A673 (cell line): ENCODE measurements at regions of chr1 and their contacts with region 1.

Region 1: DNA sequence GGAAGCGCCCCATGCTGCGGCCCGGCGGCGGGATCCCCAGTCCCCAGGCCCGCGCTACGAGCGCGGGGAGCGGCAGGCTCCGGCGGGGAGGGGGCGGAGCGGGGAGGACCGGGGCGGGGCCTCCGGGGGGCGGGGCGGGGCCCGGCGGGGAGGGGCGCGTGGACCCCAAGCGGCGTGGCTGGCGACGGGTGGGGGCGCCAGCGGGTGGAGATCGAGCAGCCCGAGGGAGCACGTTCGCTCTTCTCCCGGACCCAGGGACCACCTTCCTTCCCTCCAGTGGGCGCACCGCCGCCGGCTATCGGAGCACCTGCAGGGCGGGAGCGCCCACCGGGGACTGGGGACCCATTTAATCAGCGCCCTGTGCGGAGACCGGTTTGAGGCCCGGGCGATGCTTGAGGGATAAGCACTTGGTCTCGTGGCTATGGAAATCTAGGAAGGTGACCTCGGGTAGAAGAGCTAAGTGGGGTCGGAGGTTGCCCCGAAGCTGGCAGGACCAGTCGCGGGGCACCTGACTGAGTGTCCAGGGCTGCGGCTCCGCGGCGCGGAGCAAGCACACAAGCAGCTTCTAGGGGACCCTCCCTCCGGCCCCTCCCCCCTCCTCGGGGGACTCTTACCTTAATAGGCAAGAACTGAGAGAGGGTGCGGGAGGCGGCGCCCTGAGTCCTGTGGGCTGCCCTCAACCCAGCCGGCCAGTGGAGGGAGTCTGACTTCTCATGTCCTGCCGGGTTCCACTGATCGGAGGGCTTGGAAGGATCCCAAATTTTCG is at the start of gene TSPAN2:
- DNase-seq: peak; percentile 42
- H3K4me3 ChIP-seq: peak within 1 kb of the TSS; percentile 57
- H3K27ac ChIP-seq: no peak within 1 kb of the TSS
- H3K4me1 ChIP-seq: peaks cover 24% of the 10 kb centered on the region
- H3K27me3 ChIP-seq: no peaks in the 10 kb centered on the region
- CTCF ChIP-seq: 0 out of 2 replicates have a peak, but pooled peaks have one; percentile 7
- total RNA-seq, gene TSPAN2: 1.9 and 2.8 TPM in 2 replicates

Region 2: DNA sequence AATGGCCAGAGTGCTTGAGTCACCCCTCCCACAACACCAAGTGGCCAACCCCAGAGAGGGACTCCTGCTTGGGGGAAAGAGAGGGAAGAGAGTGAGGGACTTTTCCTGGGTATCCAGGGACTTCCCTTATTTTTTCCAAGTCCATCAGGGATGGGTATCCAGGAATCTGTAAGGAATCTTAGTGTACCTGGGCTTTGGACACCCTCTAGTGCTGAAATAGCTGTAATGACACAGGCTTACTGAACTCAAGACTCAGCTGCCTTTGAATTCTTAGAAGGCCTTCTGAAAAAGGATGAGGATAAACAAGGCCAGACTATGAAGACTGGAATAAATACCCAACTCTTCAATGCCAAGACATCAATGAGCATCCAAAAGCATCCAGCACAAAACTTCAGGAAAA is 47.9 kb before region 1 on chr1:
- CTCF ChIA-PET with region 1: no interaction called
- POLR2A ChIA-PET with region 1: no interaction called
- intact Hi-C with region 1: no loop called
- DNase-seq: peak; percentile 35
- H3K4me3 ChIP-seq: no peak overlapping the region
- H3K27ac ChIP-seq: no peak overlapping the region
- H3K4me1 ChIP-seq: no peaks in the 10 kb centered on the region
- H3K27me3 ChIP-seq: no peaks in the 10 kb centered on the region
- CTCF ChIP-seq: peak; percentile 50

Region 3: DNA sequence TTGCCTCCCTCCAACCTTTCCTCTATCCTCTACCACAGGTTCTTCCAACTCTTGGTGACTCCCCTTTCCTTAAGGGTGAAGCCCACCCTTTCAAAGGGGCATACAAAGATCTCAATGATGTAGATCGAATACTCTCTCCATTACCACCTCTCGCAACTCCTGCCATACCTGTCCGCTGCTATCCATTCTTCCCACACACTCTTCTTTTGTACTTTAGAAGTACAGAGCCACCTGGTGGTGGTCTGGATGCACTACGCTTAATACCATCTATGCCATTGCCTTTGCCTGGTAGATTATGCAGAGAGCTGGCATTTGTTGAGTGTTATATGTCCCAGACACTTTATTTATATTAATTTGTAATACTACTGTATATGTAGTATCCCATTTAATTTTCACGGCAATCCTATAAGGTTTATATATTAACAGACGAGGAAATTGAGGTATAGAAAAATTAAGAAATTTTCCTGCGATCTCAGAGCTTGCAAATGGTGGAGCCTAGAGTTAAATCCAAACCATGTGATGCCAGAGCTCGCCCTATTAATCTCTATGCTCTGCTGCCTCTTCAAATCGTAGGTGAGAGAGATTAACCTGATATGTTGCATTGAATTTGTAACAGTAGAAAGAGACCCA is 37.0 kb before region 1 on chr1:
- CTCF ChIA-PET with region 1: no interaction called
- POLR2A ChIA-PET with region 1: no interaction called
- intact Hi-C with region 1: loop called (anchors 2 kb)
- DNase-seq: peak; percentile 76
- H3K4me3 ChIP-seq: no peak overlapping the region
- H3K27ac ChIP-seq: no peak overlapping the region
- H3K4me1 ChIP-seq: no peaks in the 10 kb centered on the region
- H3K27me3 ChIP-seq: no peaks in the 10 kb centered on the region
- CTCF ChIP-seq: peak; percentile 94

Region 4: GRCh38 chr1:115373305-115373704 is 283.7 kb after region 1 on chr1:
- CTCF ChIA-PET with region 1: no interaction called
- POLR2A ChIA-PET with region 1: interaction called, 13 read pairs
- intact Hi-C with region 1: no loop called
- DNase-seq: no peak
- H3K4me3 ChIP-seq: no peak overlapping the region
- H3K27ac ChIP-seq: no peak overlapping the region
- H3K4me1 ChIP-seq: no peaks in the 10 kb centered on the region
- H3K27me3 ChIP-seq: peaks cover 7% of the 10 kb centered on the region
- CTCF ChIP-seq: no peak